ENCODE measurements at regions of chr3 and their contacts with region 1.

Region 1: GRCh38 chr3:141192345-141192744 is 39.3 kb upstream of the PXYLP1 start:
- DNase-seq: peak; percentile 99
- ATAC-seq: peak; percentile 100
- H3K4me3 Mint-ChIP-seq: no peak overlapping the region
- H3K27ac Mint-ChIP-seq: no peak overlapping the region
- H3K4me1 Mint-ChIP-seq: peaks cover 15% of the 10 kb centered on the region
- H3K27me3 Mint-ChIP-seq: peaks cover 3% of the 10 kb centered on the region
- CTCF ChIP-seq: peak; percentile 99

Region 2: DNA sequence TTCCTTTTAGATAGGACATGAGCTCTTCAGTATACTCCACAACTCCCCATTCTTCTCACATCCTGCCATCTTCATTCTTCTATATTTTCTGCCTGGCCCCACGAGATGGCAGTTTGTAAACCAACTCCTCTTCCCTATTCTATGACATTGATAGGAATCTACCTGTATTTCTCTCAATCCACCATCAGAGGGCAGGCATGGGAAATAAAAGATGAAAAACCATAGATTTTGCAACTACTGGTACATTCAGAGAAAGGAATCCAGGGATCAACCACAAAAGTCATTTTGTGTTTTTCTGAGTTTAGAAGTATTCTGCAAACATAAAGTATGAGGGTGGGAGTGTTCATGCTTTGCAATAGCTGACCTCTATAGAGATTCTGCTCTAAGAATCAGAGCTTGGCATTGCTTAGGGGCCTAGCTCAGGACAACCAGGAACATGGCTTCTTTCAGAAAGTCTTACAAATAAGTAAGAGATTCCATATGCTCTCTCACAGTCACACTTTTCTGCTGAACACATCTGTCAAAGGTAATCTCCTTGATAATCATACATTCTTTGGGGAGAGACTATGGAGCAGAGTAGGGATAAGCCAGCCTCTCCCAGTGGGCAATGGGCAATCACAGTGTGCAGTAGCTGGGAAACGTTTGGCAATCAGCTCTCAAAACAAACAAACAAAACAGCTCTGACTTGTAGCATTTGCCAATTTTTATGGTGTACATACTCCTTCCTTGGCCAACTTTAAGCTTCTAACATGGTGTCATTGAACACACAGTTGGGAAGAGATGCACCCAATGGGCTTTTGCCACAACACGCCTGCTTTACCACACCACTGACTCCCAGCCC is 293.8 kb before region 1 on chr3:
- CTCF ChIA-PET with region 1: interaction called, 19 read pairs
- POLR2A ChIA-PET with region 1: no interaction called
- intact Hi-C with region 1: loop called (anchors 1 kb)
- DNase-seq: peak; percentile 6
- ATAC-seq: peak; percentile 74
- H3K4me3 Mint-ChIP-seq: no peak overlapping the region
- H3K27ac Mint-ChIP-seq: no peak overlapping the region
- H3K4me1 Mint-ChIP-seq: no peaks in the 10 kb centered on the region
- H3K27me3 Mint-ChIP-seq: peaks cover 10% of the 10 kb centered on the region
- CTCF ChIP-seq: peak; percentile 70

Region 3: DNA sequence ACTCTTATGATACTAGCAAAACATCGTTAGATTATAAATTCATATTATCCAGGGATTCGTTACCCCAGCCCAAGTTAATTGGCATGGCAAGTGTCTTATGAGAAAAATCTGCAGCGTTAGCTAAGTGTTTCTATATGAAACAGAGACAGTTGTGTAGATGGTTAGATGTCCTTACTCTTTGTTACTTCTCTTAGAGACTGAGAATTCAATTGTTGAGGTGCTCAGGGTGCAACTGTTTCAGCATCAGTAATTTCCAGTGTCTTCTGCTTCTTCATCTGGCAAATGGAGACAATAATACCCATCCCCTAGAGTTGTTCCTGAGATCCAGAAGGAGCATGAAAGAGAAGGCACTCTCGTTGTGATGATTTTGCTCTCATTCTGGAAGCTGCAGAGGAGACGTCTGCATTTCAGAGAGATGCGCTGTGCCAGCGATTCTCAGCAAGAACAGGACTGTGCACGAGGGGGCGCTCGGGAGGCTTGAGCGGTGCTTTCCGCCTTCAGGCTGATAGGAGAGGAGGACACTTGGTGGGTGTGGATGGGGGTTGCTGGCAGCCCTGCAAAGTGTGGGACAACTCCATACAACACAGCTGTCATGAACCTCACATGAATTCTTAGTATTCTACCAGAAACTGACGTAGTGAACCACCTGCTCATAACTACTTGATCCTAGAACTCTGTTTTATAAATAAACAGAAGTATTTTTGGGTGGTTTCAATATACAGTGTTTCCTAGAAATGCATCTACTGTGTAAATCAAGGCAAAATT is 180.9 kb before region 1 on chr3:
- CTCF ChIA-PET with region 1: interaction called, 52 read pairs
- POLR2A ChIA-PET with region 1: no interaction called
- intact Hi-C with region 1: loop called (anchors 1 kb)
- DNase-seq: peak; percentile 97
- ATAC-seq: peak; percentile 98
- H3K4me3 Mint-ChIP-seq: no peak overlapping the region
- H3K27ac Mint-ChIP-seq: no peak overlapping the region
- H3K4me1 Mint-ChIP-seq: peaks cover 10% of the 10 kb centered on the region
- H3K27me3 Mint-ChIP-seq: peaks cover 18% of the 10 kb centered on the region
- CTCF ChIP-seq: peak; percentile 78

Region 4: DNA sequence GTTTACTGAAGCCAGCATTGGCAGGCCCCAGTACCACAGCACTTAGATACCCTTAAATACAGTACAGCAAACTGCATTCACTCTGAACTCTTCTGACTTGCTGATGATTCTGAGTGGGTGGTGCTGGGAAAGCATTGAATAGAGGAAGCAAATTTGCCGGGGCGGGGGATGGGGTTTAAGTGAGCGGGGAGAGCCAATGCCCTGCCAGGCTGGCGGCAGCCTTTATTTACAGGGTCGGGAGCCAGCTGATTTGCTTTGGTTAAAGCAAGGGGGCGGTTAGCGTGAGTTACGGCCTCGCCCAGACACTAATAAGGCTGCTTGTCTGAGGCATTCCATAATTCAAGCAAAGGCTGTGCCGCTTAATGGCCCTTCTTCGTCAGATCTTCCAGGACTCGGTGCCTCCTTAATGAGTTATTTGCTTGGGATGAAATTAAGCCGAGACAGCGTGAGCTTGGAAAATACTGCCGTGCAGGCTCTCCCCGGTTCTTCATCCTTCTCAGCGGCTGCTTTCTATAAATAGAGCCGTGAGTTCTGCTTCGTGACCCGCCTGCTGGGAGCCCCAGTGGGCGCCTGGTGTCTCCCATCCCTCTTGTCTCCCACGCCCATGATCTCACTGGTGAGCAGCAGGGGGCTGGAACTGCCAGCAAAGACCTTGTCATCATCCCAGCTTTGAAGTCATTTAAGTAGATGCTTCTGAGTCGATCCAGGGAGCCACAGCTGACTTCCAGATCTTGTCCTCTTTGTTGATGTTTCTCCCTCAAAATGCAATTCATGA is 115.4 kb before region 1 on chr3:
- CTCF ChIA-PET with region 1: interaction called, 10 read pairs
- POLR2A ChIA-PET with region 1: no interaction called
- intact Hi-C with region 1: no loop called
- DNase-seq: peak; percentile 59
- ATAC-seq: peak; percentile 67
- H3K4me3 Mint-ChIP-seq: peak overlapping the region; percentile 8
- H3K27ac Mint-ChIP-seq: no peak overlapping the region
- H3K4me1 Mint-ChIP-seq: peaks cover 5% of the 10 kb centered on the region
- H3K27me3 Mint-ChIP-seq: no peaks in the 10 kb centered on the region
- CTCF ChIP-seq: no peak

Region 5: GRCh38 chr3:141114816-141115460 is 77.4 kb before region 1 on chr3:
- CTCF ChIA-PET with region 1: interaction called, 10 read pairs
- POLR2A ChIA-PET with region 1: no interaction called
- intact Hi-C with region 1: no loop called
- DNase-seq: no peak
- ATAC-seq: no peak
- H3K4me3 Mint-ChIP-seq: no peak overlapping the region
- H3K27ac Mint-ChIP-seq: no peak overlapping the region
- H3K4me1 Mint-ChIP-seq: no peaks in the 10 kb centered on the region
- H3K27me3 Mint-ChIP-seq: peaks cover 6% of the 10 kb centered on the region
- CTCF ChIP-seq: peak; percentile 43

Region 6: GRCh38 chr3:141261472-141262307 is 69.3 kb after region 1 on chr3:
- CTCF ChIA-PET with region 1: no interaction called
- POLR2A ChIA-PET with region 1: no interaction called
- intact Hi-C with region 1: no loop called
- DNase-seq: peak; percentile 63
- ATAC-seq: peak; percentile 59
- H3K4me3 Mint-ChIP-seq: no peak overlapping the region
- H3K27ac Mint-ChIP-seq: peak overlapping the region; percentile 68
- H3K4me1 Mint-ChIP-seq: peaks cover 59% of the 10 kb centered on the region
- H3K27me3 Mint-ChIP-seq: no peaks in the 10 kb centered on the region
- CTCF ChIP-seq: no peak

Region 7: GRCh38 chr3:141769221-141769894 is 577.0 kb after region 1 on chr3:
- CTCF ChIA-PET with region 1: no interaction called
- POLR2A ChIA-PET with region 1: no interaction called
- intact Hi-C with region 1: no loop called
- DNase-seq: no peak
- ATAC-seq: no peak
- H3K4me3 Mint-ChIP-seq: no peak overlapping the region
- H3K27ac Mint-ChIP-seq: no peak overlapping the region
- H3K4me1 Mint-ChIP-seq: peaks cover 2% of the 10 kb centered on the region
- H3K27me3 Mint-ChIP-seq: no peaks in the 10 kb centered on the region
- CTCF ChIP-seq: no peak

Measured in activated CD8-positive, alpha-beta T cell treated with anti-CD3 and anti-CD28 coated beads for 36 hours (primary cell).